Activated CD4-positive, alpha-beta memory T cell treated with anti-CD3 and anti-CD28 coated beads, Interleukin-2, amount 10 ng/mL, durations not matched to agents 7 days and 5 days (primary cell): ENCODE measurements at regions of chr15 and their contacts with region 1.

Region 1: GRCh38 chr15:40952901-40953712 is at the start of gene CHAC1:
- DNase-seq: peak; percentile 98
- H3K4me3 Mint-ChIP-seq: peak within 1 kb of the TSS; percentile 88
- H3K27ac Mint-ChIP-seq: peak within 1 kb of the TSS; percentile 87
- H3K4me1 Mint-ChIP-seq: peaks cover 46% of the 10 kb centered on the region
- H3K27me3 Mint-ChIP-seq: peaks cover 2% of the 10 kb centered on the region
- total RNA-seq, gene CHAC1: 20.3 to 22.0 TPM

Region 2: DNA sequence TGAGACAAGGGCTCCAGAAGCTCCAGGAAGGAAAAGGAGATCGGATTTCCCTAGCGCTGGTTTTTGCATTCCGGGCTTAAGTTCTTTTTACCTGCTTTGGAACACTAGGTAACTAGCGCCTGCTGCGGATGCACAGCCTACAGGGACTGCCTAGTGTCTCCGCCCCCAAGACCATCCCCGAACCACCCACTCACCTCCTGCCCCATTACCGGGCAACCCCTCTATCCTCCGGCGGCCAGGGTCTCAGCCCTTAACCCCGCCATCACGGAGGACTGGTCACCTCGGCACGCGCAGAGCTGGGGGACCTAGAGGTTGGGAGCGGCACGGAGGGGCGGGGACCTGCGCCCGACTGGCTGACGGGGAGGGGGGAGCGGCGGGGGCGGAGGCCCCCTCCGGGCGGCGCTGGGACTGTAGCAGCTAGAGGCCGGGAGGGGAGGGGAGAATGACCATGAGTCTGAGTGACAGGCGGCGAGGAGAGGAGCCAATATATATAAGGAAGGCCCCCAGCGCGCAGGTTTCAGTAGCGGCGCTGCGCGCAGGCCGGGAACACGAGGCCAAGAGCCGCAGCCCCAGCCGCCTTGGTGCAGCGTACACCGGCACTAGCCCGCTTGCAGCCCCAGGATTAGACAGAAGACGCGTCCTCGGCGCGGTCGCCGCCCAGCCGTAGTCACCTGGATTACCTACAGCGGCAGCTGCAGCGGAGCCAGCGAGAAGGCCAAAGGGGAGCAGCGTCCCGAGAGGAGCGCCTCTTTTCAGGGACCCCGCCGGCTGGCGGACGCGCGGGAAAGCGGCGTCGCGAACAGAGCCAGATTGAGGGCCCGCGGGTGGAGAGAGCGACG is 24.1 kb before region 1 on chr15 and contains the start of gene DLL4:
- CTCF ChIA-PET with region 1: interaction called, 12 read pairs
- POLR2A ChIA-PET with region 1: interaction called, 6 read pairs
- DNase-seq: peak; percentile 42
- H3K4me3 Mint-ChIP-seq: peak within 1 kb of the TSS; percentile 50
- H3K27ac Mint-ChIP-seq: no peak within 1 kb of the TSS
- H3K4me1 Mint-ChIP-seq: peaks cover 47% of the 10 kb centered on the region
- H3K27me3 Mint-ChIP-seq: peaks cover 75% of the 10 kb centered on the region
- total RNA-seq, gene DLL4: not detected

Region 3: GRCh38 chr15:40964634-40965033 is 11.5 kb after region 1 on chr15:
- CTCF ChIA-PET with region 1: interaction called, 17 read pairs
- POLR2A ChIA-PET with region 1: no interaction called
- DNase-seq: no peak
- H3K4me3 Mint-ChIP-seq: no peak overlapping the region
- H3K27ac Mint-ChIP-seq: no peak overlapping the region
- H3K4me1 Mint-ChIP-seq: peaks cover 2% of the 10 kb centered on the region
- H3K27me3 Mint-ChIP-seq: no peaks in the 10 kb centered on the region

Region 4: DNA sequence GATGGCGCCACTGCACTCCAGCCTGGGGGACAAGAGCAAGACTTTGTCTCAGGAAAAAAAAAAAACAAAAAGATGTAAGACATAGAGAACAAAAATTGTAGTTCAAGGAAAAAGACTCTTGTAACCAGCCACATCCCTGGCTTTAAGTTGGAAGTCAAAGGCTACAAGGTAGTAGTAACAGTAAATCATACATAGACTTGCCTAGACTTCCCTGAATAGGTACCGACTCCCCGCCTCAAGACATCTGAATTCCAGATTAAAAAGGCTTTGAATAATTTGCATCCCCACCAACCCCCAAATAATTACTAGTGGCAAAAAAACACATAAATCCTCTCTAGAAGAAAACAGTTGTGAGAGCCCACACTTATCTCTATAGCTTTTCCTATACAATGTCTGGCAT is 107.4 kb after region 1 on chr15:
- CTCF ChIA-PET with region 1: no interaction called
- POLR2A ChIA-PET with region 1: no interaction called
- DNase-seq: no peak
- H3K4me3 Mint-ChIP-seq: no peak overlapping the region
- H3K27ac Mint-ChIP-seq: no peak overlapping the region
- H3K4me1 Mint-ChIP-seq: no peaks in the 10 kb centered on the region
- H3K27me3 Mint-ChIP-seq: no peaks in the 10 kb centered on the region